ENCODE measurements at regions of chr11 and their contacts with region 1.

Region 1: GRCh38 chr11:114180301-114181055 is 115.7 kb upstream of the NNMT start:
- DNase-seq: no peak
- ATAC-seq: peak; percentile 94
- H3K4me3 ChIP-seq: no peak overlapping the region
- H3K27ac ChIP-seq: no peak overlapping the region
- H3K4me1 ChIP-seq: no peaks in the 10 kb centered on the region
- H3K27me3 ChIP-seq: peaks cover 55% of the 10 kb centered on the region
- CTCF ChIP-seq: peak; percentile 63 to 72 (median 71)
- POLR2A ChIP-seq: no peak
- RAD21 ChIP-seq: peak; percentile 81

Region 2: DNA sequence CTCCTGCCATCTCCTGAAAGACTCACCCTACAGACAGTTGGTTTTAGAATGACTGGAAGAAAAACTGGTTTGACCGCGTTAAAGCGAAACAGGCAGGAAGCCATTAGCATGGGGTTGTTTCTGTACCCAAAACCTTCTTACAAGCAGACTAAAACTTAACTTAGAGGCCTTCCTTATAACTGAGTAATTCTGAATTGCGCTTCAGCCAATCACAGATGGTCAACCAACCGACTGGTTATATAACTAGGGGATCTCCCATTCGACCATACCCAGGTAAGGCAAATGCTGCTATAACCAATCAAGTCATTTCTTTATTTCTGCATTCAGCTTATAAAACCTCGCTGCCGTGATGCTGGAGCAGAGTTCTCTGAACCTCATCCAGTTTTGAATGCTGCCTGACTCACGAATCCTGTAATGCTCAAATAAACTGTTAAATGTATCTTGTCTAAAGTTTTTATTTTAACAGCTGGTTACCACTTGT is 617.5 kb before region 1 on chr11:
- CTCF ChIA-PET with region 1: no interaction called
- POLR2A ChIA-PET with region 1: no interaction called
- RAD21 ChIA-PET with region 1: no interaction called
- intact Hi-C with region 1: no loop called
- DNase-seq: no peak
- ATAC-seq: no peak
- H3K4me3 ChIP-seq: no peak overlapping the region
- H3K27ac ChIP-seq: no peak overlapping the region
- H3K4me1 ChIP-seq: no peaks in the 10 kb centered on the region
- H3K27me3 ChIP-seq: peaks cover 13% of the 10 kb centered on the region; the same call in 1 of the 2 replicates
- CTCF ChIP-seq: no peak
- POLR2A ChIP-seq: no peak
- RAD21 ChIP-seq: no peak

Region 3: GRCh38 chr11:113994077-113994954 is 186.2 kb before region 1 on chr11:
- CTCF ChIA-PET with region 1: interaction called, 3 read pairs
- POLR2A ChIA-PET with region 1: no interaction called
- RAD21 ChIA-PET with region 1: no interaction called
- intact Hi-C with region 1: loop called (anchors 1 kb)
- DNase-seq: no peak
- ATAC-seq: peak; percentile 75
- H3K4me3 ChIP-seq: no peak overlapping the region
- H3K27ac ChIP-seq: no peak overlapping the region
- H3K4me1 ChIP-seq: no peaks in the 10 kb centered on the region
- H3K27me3 ChIP-seq: peaks cover 33% of the 10 kb centered on the region
- CTCF ChIP-seq: peak; percentile 66 to 81 (median 74)
- POLR2A ChIP-seq: no peak
- RAD21 ChIP-seq: peak; percentile 82

Measured in HCT116 (cell line).